ENCODE measurements at regions of chr18 and their contacts with region 1.

Region 1: DNA sequence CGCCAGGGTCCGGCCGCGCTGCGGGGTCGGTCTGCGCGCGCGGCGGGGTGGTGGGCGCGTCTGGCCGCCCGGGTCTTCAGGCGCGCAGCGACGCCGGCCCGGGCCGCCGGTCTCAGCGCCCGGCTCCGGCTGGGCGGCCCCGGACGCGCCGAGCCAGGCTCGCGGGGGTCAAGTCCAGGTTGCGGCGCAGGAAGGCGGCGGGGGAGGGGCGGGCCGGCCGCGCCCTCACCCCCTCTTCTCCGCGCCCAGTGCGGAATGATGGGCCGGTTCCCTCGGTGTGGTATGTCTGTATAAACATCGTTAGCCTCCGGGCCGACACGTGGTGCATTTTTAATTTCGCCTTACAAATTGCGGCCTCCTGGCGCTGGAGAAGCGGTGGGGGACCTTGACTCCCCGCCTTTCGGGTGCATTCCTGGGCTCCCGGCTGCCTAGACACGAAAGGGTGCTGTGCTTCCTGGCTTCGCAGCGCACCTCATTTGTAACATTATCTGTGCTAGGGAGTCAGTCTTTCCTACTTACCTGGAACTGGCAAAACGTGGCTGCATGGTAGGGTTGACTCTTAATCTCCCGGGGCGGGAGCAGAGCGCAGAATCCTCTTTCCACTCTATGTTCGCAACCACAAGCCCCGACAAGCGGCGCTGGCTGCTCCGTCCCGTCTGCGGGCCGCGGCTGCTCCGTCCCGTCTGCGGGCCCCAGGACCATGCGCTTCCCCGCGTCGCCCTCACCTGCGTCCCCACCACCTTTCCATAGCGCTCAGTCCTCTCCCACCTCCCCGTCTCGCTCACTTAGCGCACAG is 69.0 kb downstream of the CTAGE1 start:
- DNase-seq: peak; percentile 77
- ATAC-seq: peak; percentile 70
- H3K4me3 ChIP-seq: peak overlapping the region; percentile 65
- H3K27ac ChIP-seq: peak overlapping the region; percentile 62
- H3K4me1 ChIP-seq: peaks cover 67% of the 10 kb centered on the region
- H3K27me3 ChIP-seq: no peaks in the 10 kb centered on the region
- CTCF ChIP-seq: no peak

Region 2: DNA sequence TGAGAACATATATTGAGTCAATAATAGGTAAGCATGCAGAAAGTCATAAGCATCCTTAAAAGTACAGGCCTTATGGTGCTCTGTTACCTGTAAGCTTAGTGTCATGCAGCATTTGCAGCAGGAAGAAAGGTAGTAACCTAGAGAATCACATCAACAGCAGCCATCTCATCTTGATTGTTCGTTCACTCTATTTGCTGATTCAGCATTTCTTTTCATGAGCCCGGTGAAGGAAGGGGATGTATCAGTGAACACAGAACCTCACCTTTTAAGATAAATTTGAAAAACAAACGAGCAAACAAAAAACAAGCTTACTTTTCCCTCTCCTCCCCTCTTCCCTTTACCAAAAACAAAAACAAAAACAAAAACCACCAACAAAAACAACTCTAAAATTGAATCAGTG is 518.2 kb before region 1 on chr18:
- CTCF ChIA-PET with region 1: no interaction called
- POLR2A ChIA-PET with region 1: interaction called, 11 read pairs
- intact Hi-C with region 1: no loop called
- DNase-seq: no peak
- ATAC-seq: no peak
- H3K4me3 ChIP-seq: no peak overlapping the region
- H3K27ac ChIP-seq: no peak overlapping the region
- H3K4me1 ChIP-seq: peaks cover 6% of the 10 kb centered on the region; the same call in 1 of the 2 replicates
- H3K27me3 ChIP-seq: no peaks in the 10 kb centered on the region
- CTCF ChIP-seq: no peak

Region 3: DNA sequence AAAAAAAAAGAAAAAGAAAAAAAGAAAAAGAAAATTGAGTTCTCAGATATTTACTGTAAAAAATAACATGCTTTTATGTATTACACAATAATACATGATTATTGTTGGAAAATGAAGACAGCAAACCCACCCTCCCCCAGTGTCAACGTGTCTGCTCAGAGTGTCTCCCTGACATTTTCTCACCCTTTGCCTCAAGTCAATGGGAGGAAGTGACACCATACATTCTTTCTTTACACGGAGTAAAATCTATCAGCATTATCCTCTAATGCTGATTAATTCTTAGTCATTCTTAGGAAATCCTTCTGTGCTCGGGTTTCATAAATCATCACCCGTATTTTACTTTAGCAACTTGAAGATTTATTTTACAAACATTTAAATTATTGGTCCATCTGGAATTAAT is 37.0 kb after region 1 on chr18:
- CTCF ChIA-PET with region 1: no interaction called
- POLR2A ChIA-PET with region 1: no interaction called
- intact Hi-C with region 1: loop called (anchors 5 kb)
- DNase-seq: peak; percentile 84
- ATAC-seq: peak; percentile 93
- H3K4me3 ChIP-seq: no peak overlapping the region
- H3K27ac ChIP-seq: peak overlapping the region; percentile 81
- H3K4me1 ChIP-seq: peaks cover 28% of the 10 kb centered on the region
- H3K27me3 ChIP-seq: no peaks in the 10 kb centered on the region
- CTCF ChIP-seq: no peak

Measured in PC-3 (cell line).